ENCODE measurements at regions of chr11 and their contacts with region 1.

Region 1: GRCh38 chr11:6682936-6683861 is at the start of gene MRPL17:
- DNase-seq: peak; percentile 99
- ATAC-seq: peak; percentile 95
- H3K4me3 Mint-ChIP-seq: peak within 1 kb of the TSS; percentile 99
- H3K27ac Mint-ChIP-seq: peak within 1 kb of the TSS; percentile 100
- H3K4me1 Mint-ChIP-seq: peaks cover 41% of the 10 kb centered on the region
- H3K27me3 Mint-ChIP-seq: no peaks in the 10 kb centered on the region; the same call in none of the 2 replicates
- CTCF ChIP-seq: peak; percentile 72
- total RNA-seq, gene MRPL17: 68.1 to 77.1 TPM (median 70.1 TPM) in 3 replicates

Region 2: GRCh38 chr11:6603287-6604080 is 79.7 kb before region 1 on chr11 and contains the starts of genes ILK and RRP8:
- CTCF ChIA-PET with region 1: interaction called, 6 read pairs
- POLR2A ChIA-PET with region 1: interaction called, 11 read pairs
- DNase-seq: peak; percentile 93
- ATAC-seq: peak; percentile 79
- H3K4me3 Mint-ChIP-seq: no peak within 1 kb of the TSS
- H3K27ac Mint-ChIP-seq: no peak within 1 kb of the TSS
- H3K4me1 Mint-ChIP-seq: peaks cover 14% of the 10 kb centered on the region
- H3K27me3 Mint-ChIP-seq: no peaks in the 10 kb centered on the region
- CTCF ChIP-seq: no peak
- total RNA-seq, gene ILK: 97.7 to 112 TPM (median 110 TPM) in 3 replicates
- total RNA-seq, gene RRP8: 12.5 to 15.0 TPM (median 14.6 TPM) in 3 replicates

Region 3: GRCh38 chr11:6629892-6630633 is 53.1 kb before region 1 on chr11:
- CTCF ChIA-PET with region 1: interaction called, 10 read pairs
- POLR2A ChIA-PET with region 1: no interaction called
- DNase-seq: peak; percentile 80
- ATAC-seq: peak; percentile 77
- H3K4me3 Mint-ChIP-seq: peak overlapping the region; percentile 66
- H3K27ac Mint-ChIP-seq: no peak overlapping the region
- H3K4me1 Mint-ChIP-seq: peaks cover 8% of the 10 kb centered on the region; the same call in 1 of the 2 replicates
- H3K27me3 Mint-ChIP-seq: peaks cover 41% of the 10 kb centered on the region
- CTCF ChIP-seq: no peak